ENCODE measurements at regions of chr2 and their contacts with region 1.

Region 1: DNA sequence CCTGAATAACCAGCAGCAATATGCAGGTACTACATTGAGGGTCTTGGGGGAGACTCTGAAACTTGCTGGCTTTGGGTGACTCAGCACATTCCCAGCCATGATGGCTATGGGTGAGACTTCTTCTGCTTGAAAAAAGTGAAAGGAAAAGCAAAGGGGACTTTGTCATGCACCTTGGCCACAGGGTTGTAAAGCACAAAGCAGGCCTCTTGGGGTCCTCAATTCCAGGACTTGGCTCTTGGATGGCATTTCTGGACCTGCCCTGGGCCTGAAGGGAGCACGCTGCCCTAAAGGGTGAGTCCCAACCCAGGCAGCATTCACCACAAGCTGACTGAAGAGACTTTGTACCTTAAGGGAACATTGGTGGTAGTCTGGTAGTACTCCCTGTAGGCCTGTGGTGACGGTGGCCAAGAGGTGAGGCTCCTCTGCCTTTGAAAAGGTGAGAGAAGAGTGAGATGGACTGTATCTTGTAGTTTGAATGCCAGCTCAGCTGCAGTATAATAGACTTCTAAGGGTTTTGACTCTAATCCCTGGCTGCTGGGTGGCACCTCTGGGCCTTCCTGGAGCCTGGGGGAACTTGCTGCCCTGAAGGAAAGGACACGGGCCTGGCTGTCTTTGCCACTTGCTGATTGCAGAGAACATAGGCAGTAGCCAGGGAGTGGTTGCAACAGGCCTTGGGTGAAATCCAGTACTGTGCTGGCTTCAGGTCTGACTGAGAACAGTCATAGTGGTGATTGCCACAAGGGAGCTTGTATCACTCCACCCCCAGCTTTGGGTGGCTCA is 36.5 kb upstream of the CYTIP start:
- DNase-seq: peak; percentile 45
- H3K4me3 Mint-ChIP-seq: peak overlapping the region; percentile 62
- H3K27ac Mint-ChIP-seq: peak overlapping the region; percentile 88
- H3K4me1 Mint-ChIP-seq: peaks cover 81% of the 10 kb centered on the region
- H3K27me3 Mint-ChIP-seq: no peaks in the 10 kb centered on the region

Region 2: GRCh38 chr2:157292853-157293252 is 187.5 kb before region 1 on chr2:
- CTCF ChIA-PET with region 1: no interaction called
- POLR2A ChIA-PET with region 1: no interaction called
- DNase-seq: no peak
- H3K4me3 Mint-ChIP-seq: no peak overlapping the region
- H3K27ac Mint-ChIP-seq: no peak overlapping the region
- H3K4me1 Mint-ChIP-seq: no peaks in the 10 kb centered on the region
- H3K27me3 Mint-ChIP-seq: peaks cover 6% of the 10 kb centered on the region

Region 3: GRCh38 chr2:157468931-157469708 is 11.3 kb before region 1 on chr2:
- CTCF ChIA-PET with region 1: interaction called, 19 read pairs
- POLR2A ChIA-PET with region 1: interaction called, 4 read pairs
- DNase-seq: peak; percentile 52
- H3K4me3 Mint-ChIP-seq: peak overlapping the region; percentile 76
- H3K27ac Mint-ChIP-seq: peak overlapping the region; percentile 98
- H3K4me1 Mint-ChIP-seq: peaks cover 94% of the 10 kb centered on the region
- H3K27me3 Mint-ChIP-seq: no peaks in the 10 kb centered on the region

Region 4: DNA sequence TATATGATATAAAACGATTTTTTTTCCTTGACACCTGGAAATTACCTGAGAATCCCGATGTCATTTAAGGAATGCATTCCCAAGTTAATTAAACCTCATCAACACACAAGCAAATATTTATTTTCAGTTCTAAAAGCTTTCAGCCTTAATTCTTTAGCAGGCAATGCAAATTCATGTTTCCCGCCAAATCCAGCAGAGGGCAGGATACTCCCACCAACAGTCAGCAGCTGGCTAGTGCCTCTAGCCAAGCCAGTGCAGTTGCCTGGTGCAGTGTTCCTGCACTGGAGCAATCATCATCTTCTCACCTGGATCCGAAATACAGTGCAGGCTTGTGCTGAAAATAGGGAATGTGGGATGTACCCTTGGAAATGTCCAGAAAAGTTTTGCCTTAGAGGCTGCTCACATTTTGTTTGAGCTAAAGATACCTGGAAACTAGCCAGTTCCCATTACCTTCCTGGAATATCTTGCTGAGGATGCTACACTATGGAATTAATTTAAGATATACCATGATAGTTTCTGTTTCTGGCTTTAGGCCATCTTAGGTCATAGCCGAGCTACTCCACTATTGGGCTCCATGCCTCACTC is 11.9 kb after region 1 on chr2:
- CTCF ChIA-PET with region 1: interaction called, 38 read pairs
- POLR2A ChIA-PET with region 1: no interaction called
- DNase-seq: peak; percentile 80
- H3K4me3 Mint-ChIP-seq: no peak overlapping the region
- H3K27ac Mint-ChIP-seq: no peak overlapping the region
- H3K4me1 Mint-ChIP-seq: peaks cover 68% of the 10 kb centered on the region
- H3K27me3 Mint-ChIP-seq: no peaks in the 10 kb centered on the region

Region 5: DNA sequence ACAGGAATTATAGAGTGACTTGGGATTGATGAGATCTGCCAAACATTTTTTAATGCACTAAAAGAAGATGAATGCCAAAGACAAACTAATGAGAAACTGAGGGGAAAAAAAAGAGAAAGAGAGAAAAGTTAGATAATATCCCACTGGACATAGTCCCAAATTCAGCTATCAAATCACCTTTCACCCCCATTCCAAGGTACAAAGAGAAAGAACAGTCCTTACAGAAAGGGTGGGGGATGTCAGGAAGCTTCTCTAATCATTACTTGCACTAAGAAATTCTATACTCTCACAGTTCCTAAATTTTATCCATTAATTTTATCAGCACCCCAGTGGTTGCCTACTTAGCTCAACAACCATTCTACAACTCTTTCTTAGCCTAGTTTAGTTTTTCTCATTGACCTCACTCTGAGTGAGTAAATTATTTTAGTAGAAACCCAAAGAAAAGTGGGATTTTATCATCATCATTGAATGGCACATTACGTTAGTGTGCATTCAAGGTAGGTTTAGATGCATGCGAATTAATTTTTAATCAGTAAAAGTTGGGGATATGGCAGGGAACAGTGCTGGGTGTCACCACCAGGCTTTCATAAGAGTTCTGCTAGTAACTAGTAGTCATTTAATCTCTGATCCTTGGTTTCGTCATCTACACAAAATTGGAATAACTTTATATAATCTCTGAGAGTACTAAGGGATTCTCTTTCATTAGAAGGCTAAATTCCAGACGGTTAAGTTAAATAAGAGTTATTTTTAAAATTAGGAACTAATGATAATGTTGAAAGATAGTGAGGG is 48.8 kb after region 1 on chr2:
- CTCF ChIA-PET with region 1: no interaction called
- POLR2A ChIA-PET with region 1: no interaction called
- DNase-seq: no peak
- H3K4me3 Mint-ChIP-seq: no peak overlapping the region
- H3K27ac Mint-ChIP-seq: no peak overlapping the region
- H3K4me1 Mint-ChIP-seq: no peaks in the 10 kb centered on the region
- H3K27me3 Mint-ChIP-seq: peaks cover 2% of the 10 kb centered on the region

Region 6: GRCh38 chr2:157876066-157876787 is 395.9 kb after region 1 on chr2 and contains the start of gene ACVR1:
- CTCF ChIA-PET with region 1: no interaction called
- POLR2A ChIA-PET with region 1: no interaction called
- DNase-seq: peak; percentile 89
- H3K4me3 Mint-ChIP-seq: peak within 1 kb of the TSS; percentile 96
- H3K27ac Mint-ChIP-seq: peak within 1 kb of the TSS; percentile 94
- H3K4me1 Mint-ChIP-seq: peaks cover 63% of the 10 kb centered on the region
- H3K27me3 Mint-ChIP-seq: no peaks in the 10 kb centered on the region
- total RNA-seq, gene ACVR1: 26.0 to 29.6 TPM

Measured in activated CD4-positive, alpha-beta T cell treated with anti-CD3 and anti-CD28 coated beads, Interleukin-2, amount 10 ng/mL, durations not matched to agents 7 days and 5 days (primary cell).